Sciatic nerve (tissue), 2 donors: ENCODE measurements at regions of chr19 and their contacts with region 1.

Region 1: DNA sequence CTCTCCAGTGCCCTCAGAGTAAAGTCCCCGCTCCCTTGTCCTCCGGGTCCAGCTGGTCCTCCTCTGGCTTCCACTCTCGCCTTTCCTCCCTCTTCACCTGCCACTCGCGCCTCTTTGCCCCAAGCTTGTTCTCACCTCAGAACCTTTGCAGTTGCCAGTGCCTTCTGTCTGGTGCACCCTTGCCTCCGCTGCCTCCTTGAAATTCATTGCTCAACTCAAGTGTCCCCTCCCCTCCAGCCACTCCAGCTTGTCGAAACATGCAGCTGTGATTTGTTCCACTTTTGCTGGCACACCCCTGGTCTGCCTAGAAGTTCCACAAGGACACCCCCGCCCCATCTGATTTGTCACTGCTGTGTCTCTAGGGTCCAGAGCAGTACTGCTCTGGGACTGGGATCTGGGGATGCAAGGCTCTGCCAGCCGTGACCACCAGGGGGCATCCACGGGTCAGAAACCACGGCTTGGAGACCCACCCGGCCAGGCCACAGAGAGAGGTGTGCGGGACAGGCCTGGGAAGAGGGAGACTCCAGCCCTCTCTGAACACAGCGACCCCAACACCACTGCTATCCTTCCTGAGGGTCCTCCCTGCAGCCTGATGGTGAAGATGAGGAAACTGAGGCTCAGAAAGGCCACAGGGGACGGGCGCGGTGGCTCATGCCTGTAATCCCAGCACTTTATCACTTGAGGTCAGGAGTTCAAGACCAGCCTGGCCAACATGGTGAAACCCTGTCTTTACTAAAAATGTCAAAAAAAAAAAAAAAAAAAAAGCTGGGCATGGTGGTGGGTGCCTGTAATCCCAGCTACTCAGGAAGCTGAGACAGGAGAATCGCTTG is 49.9 kb downstream of the AP1M1 start:
- DNase-seq: peak; percentile 93
- ATAC-seq: peak; percentile 95

Region 2: GRCh38 chr19:14413693-14414181 is 1833.8 kb before region 1 on chr19:
- intact Hi-C with region 1: loop called (anchors 5 kb)
- DNase-seq: no peak
- ATAC-seq: peak; percentile 53

Region 3: DNA sequence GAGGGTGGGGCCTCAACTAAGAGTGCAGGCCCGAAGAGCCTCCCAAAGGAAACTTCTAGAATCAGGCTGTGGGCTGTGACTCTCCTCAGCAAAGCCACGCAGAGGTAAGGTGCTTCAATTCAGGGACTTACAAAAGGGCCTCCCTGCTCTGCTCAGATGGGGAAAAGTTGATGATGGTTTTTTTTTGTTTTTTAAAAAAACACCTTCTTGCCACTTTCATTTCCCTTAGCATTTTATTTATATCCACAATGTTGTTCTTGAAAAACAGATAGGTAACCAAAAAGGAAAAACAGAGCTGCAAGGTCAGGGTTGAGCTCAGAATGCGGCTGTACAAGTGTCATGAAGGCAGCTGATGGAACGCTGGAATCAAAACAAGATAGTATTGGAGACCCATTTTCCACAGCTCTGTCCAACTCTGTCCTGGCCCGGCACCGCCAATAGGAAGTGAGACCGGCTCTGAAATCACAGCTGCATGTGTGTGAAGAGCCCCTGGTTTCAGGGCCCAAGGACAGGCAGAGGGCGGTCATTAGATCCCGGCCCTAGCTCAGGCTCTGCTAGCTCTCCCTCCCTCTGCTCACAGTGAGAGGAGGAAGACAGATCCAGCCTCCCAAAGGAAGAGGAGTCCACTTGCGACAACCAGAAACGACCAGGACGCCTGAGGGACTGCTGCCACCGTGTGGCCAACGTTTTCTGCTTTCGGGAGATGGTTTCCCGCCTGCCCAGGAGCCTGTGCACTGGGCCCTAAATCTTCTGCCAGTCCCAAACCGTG is 135.4 kb after region 1 on chr19:
- intact Hi-C with region 1: loop called (anchors 5 kb)
- DNase-seq: peak; percentile 94
- ATAC-seq: peak; percentile 86